GM12878 (cell line): ENCODE measurements at regions of chr13 and their contacts with region 1.

Region 1: DNA sequence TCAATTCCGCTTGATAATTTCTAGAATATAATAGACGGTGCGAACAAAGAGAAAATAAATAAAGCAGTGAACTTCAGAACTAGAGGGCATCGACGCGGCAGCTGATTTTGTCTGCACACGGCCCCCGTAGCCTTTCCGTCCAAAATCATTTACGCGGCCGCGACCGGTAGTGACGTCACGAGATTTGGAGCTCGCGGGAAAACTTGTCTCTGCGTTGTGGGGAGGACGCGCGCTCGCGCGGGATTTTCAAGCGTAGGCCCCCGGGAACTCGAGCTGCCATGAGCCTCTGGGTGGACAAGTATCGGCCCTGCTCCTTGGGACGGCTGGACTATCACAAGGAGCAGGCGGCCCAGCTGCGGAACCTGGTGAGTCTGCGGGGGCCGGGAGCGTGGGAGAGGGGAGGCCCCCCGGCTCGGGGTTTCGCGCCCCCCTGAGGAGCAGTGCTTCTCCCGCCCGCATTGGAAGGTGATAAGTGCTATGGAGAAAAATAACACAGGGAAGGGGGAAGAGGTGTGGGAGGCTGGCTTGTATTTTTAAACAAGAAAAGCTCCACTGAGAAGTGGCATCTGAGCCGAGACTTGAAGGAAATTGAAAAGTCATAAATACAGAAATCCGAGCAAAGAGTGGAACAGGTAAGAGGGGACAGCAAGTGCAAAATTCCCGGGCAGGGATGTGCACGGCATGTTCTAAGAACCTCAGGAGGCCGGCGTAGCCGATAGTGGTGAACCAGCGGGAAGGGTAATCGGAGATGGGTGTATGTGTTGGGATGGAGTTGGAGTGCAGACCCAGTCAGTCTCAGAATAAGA is at the start of gene RFC3:
- DNase-seq: peak; percentile 69
- ATAC-seq: peak; percentile 95
- H3K4me3 ChIP-seq: peak within 1 kb of the TSS; percentile 96
- H3K27ac ChIP-seq: peak within 1 kb of the TSS; percentile 77
- H3K4me1 ChIP-seq: no peaks in the 10 kb centered on the region
- H3K27me3 ChIP-seq: no peaks in the 10 kb centered on the region
- CTCF ChIP-seq: no peak
- EP300 ChIP-seq: 0 out of 4 replicates have a peak, but pooled peaks of 1 of the 2 experiments have one; percentile 64
- POLR2A ChIP-seq: peak; percentile 89
- RAD21 ChIP-seq: 0 out of 2 replicates have a peak, but pooled peaks have one; percentile 3
- polyA plus RNA-seq, gene RFC3: 88.9 to 95.9 TPM

Region 2: DNA sequence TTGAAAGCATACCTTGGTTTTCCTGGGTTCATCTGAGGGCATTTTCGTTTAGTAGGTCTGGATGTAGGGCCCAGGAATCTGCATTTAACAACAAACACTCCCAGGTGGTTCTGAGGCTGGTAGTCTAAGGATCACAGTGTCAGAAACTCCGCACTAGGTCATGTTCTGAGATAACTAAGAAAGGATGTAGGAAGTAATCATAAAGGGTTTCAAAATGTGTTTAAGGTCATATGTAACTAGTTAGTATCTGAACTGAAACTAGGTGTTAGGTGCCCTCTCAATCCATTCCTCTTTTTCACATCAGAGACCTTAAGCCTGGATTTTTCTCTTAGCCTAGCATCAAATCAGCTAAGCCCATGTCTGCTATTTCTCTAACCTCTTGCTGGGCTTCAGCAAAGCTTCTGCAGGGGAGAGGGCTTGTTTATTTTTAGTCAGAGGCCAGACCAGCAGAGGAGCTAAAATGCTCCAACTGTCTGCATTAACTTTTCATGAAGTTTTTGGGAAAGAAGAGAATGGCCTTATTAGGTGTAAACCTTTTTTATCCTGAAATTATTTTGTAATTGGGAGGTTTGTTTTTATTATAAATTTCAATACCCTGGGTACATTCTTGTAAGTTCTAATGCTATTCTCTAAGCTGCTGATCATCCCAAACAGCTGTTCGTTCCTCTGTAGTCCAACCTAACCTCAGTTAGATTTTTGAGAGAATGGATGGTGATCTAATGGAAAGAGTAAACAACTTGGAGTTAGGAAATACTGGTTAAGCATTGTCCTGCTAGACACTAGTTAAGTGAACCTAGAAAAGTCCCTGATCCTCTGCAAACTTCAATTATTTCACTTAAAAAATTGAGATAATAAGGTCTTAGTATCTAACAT is 262.9 kb before region 1 on chr13:
- CTCF ChIA-PET with region 1: no interaction called
- POLR2A ChIA-PET with region 1: no interaction called
- RAD21 ChIA-PET with region 1: no interaction called
- SMC1A ChIA-PET with region 1: no interaction called
- in situ Hi-C with region 1: no loop called
- intact Hi-C with region 1: no loop called
- DNase-seq: no peak
- ATAC-seq: peak; percentile 96
- H3K4me3 ChIP-seq: no peak overlapping the region
- H3K27ac ChIP-seq: peak overlapping the region; percentile 46
- H3K4me1 ChIP-seq: peaks cover 11% of the 10 kb centered on the region; the same call in 1 of the 2 replicates
- H3K27me3 ChIP-seq: no peaks in the 10 kb centered on the region
- CTCF ChIP-seq: no peak
- EP300 ChIP-seq: peak in 1 of 2 experiments; percentile 8; a peak in 1 of 4 replicates
- POLR2A ChIP-seq: no peak
- RAD21 ChIP-seq: no peak

Region 3: GRCh38 chr13:33678906-33679657 is 139.0 kb before region 1 on chr13:
- CTCF ChIA-PET with region 1: no interaction called
- POLR2A ChIA-PET with region 1: no interaction called
- RAD21 ChIA-PET with region 1: interaction called, 3 read pairs
- SMC1A ChIA-PET with region 1: interaction called, 3 read pairs
- in situ Hi-C with region 1: no loop called
- intact Hi-C with region 1: loop called (anchors 5 kb)
- DNase-seq: peak; percentile 98
- ATAC-seq: peak; percentile 97
- H3K4me3 ChIP-seq: peak overlapping the region; percentile 77
- H3K27ac ChIP-seq: peak overlapping the region; percentile 95
- H3K4me1 ChIP-seq: peaks cover 5% of the 10 kb centered on the region; the same call in 1 of the 2 replicates
- H3K27me3 ChIP-seq: no peaks in the 10 kb centered on the region
- CTCF ChIP-seq: no peak
- EP300 ChIP-seq: peak; percentile 75 to 82; a peak in 2 of 4 replicates
- POLR2A ChIP-seq: peak; percentile 90
- RAD21 ChIP-seq: 0 out of 2 replicates have a peak, but pooled peaks have one; percentile 0

Region 4: DNA sequence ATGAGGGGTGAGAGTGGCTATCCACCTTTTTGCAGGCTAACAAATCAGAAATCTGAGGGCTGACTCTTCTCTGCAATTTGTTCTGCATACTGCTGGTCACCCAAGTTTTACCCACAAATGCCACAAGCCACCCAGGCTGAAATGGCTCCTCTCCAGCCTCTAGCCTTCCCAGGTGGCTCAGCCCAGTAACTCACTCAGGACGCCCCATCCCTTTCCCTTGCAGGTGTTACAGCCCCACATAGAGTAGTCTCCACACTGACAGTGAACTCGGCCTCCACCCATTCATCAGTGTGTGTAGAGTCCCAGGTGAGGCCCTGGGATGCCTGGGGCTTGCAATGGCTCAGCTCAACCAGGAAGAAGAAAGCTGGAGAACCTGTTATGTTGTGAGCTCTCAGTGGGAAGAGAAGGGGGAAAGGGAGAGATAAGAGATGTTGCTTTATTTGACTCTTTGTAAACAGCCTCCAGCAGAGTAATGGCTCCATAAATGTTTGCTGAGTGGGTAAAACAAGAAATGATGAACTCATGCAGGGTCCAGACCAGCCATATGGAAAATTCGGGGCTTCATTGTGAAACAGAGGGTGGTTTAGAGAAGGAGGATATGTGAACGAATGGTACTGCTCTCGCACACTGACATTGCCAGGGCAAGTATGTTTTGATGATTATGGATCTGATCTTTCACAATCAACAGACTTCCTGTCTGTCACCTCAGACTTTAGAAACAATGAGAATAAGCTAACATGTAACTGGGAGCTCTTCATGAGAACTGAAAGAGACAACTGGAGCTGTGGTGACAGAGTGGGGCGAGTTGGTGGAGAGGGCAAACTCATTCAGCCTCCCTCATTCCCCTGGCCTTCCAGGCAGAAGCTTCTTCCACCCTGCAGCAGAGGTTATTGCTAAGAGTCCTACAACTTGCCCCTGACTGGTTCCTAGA is 74.4 kb before region 1 on chr13:
- CTCF ChIA-PET with region 1: no interaction called
- POLR2A ChIA-PET with region 1: no interaction called
- RAD21 ChIA-PET with region 1: no interaction called
- SMC1A ChIA-PET with region 1: no interaction called
- in situ Hi-C with region 1: no loop called
- intact Hi-C with region 1: loop called (anchors 5 kb)
- DNase-seq: peak; percentile 80
- ATAC-seq: peak; percentile 77
- H3K4me3 ChIP-seq: peak overlapping the region; percentile 21; the same call in 1 of the 2 replicates
- H3K27ac ChIP-seq: peak overlapping the region; percentile 86
- H3K4me1 ChIP-seq: peaks cover 35% of the 10 kb centered on the region
- H3K27me3 ChIP-seq: no peaks in the 10 kb centered on the region
- CTCF ChIP-seq: no peak
- EP300 ChIP-seq: peak in 1 of 2 experiments; percentile 15; a peak in 1 of 4 replicates
- POLR2A ChIP-seq: no peak
- RAD21 ChIP-seq: no peak

Region 5: GRCh38 chr13:33764716-33765115 is 53.4 kb before region 1 on chr13:
- CTCF ChIA-PET with region 1: no interaction called
- POLR2A ChIA-PET with region 1: no interaction called
- RAD21 ChIA-PET with region 1: no interaction called
- SMC1A ChIA-PET with region 1: no interaction called
- in situ Hi-C with region 1: no loop called
- intact Hi-C with region 1: no loop called
- DNase-seq: no peak
- ATAC-seq: no peak
- H3K4me3 ChIP-seq: no peak overlapping the region
- H3K27ac ChIP-seq: no peak overlapping the region
- H3K4me1 ChIP-seq: no peaks in the 10 kb centered on the region
- H3K27me3 ChIP-seq: no peaks in the 10 kb centered on the region
- CTCF ChIP-seq: no peak
- EP300 ChIP-seq: no peak
- POLR2A ChIP-seq: no peak
- RAD21 ChIP-seq: no peak

Region 6: DNA sequence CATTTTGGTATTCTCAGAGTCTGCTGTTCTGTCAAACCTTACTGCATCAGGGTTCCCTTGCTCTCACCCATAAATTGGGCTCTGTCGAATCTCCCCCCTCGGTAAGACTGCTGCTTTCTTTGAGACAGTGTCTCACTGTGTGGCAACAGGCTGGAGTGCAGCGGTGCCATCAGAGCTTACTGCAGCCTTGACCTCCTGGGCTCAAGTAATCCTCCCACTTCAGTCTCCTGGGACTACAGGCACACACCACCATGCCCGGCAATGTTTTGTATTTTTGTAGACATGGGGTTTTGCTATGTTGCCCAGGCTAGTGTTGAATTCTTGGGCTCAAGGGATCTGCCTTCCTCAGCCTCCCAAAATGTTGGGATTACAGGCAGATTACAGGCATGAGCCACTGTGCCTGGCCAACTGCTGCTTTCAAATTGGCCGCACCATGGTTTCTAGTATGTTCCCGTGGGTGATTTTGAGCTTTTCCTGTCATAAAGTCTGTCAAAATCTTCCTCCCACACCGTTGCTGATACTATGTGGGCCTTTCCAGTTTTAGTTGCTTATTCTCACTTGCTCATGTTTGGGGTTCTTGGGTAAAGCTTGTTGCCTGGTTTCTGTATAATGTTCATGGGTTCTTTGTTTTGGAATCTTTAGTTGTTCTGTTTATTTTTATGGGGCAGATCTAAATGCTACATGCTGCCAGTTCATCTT is 10.5 kb after region 1 on chr13:
- CTCF ChIA-PET with region 1: interaction called, 6 read pairs
- POLR2A ChIA-PET with region 1: interaction called, 4 read pairs
- RAD21 ChIA-PET with region 1: interaction called, 3 read pairs
- SMC1A ChIA-PET with region 1: interaction called, 22 read pairs
- in situ Hi-C with region 1: no loop called
- intact Hi-C with region 1: no loop called
- DNase-seq: no peak
- ATAC-seq: peak; percentile 71
- H3K4me3 ChIP-seq: no peak overlapping the region
- H3K27ac ChIP-seq: peak overlapping the region; percentile 68
- H3K4me1 ChIP-seq: peaks cover 6% of the 10 kb centered on the region
- H3K27me3 ChIP-seq: no peaks in the 10 kb centered on the region
- CTCF ChIP-seq: no peak
- EP300 ChIP-seq: no peak
- POLR2A ChIP-seq: no peak
- RAD21 ChIP-seq: no peak

Region 7: DNA sequence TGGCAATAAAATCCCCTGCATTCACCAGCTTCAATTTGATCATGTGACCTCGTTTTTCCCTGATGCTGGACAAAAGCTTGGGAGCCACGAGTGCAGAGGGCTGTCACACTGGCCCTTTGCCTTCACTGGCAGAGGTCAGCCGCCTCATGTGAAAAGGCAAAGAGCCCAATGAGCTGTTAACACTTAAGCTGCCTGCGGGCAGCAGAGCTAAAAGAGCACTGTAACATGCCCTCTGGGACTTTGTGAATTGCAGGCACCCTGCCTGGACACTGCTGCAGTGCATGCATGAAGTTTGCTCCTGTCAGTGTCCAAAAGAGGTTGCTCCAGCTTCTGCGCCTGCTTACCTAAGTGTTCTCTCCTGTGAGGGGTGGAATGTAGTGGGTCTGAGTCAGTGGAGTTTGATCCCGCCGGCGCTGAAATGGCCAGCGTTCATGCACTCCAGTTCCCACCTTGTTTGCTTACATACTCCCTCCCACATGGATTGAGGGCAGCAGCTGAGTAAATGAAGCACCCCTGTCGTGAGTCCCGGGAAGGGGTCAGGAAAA is 193.5 kb after region 1 on chr13:
- CTCF ChIA-PET with region 1: no interaction called
- POLR2A ChIA-PET with region 1: no interaction called
- RAD21 ChIA-PET with region 1: no interaction called
- SMC1A ChIA-PET with region 1: no interaction called
- in situ Hi-C with region 1: no loop called
- intact Hi-C with region 1: no loop called
- DNase-seq: no peak
- ATAC-seq: no peak
- H3K4me3 ChIP-seq: no peak overlapping the region
- H3K27ac ChIP-seq: no peak overlapping the region
- H3K4me1 ChIP-seq: no peaks in the 10 kb centered on the region
- H3K27me3 ChIP-seq: no peaks in the 10 kb centered on the region
- CTCF ChIP-seq: no peak
- EP300 ChIP-seq: no peak
- POLR2A ChIP-seq: no peak
- RAD21 ChIP-seq: no peak